ENCODE measurements at regions of chr7 and their contacts with region 1.

Region 1: DNA sequence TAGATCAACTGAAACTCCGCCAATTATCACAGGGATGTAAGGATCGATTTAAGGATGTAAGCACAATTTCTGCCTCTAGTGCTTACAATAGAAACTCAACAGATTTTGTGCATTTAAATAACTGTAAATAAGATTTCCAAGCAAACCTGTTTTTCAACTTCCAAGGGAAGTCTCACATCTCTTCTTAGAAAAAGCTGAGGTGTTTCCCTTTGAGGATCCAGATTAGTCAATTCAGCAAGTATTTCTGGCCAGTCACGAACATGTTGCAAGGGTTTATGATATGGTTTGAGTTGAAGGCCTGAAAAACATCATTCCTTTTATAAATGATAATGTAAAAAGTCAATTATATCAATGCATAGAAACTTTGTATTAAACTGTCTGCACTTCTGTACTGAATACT is 24.0 kb downstream of the KRIT1 start:
- DNase-seq: no peak
- ATAC-seq: no peak
- H3K4me3 ChIP-seq: no peak overlapping the region
- H3K27ac ChIP-seq: no peak overlapping the region
- H3K4me1 ChIP-seq: no peaks in the 10 kb centered on the region
- H3K27me3 ChIP-seq: no peaks in the 10 kb centered on the region
- CTCF ChIP-seq: no peak

Region 2: GRCh38 chr7:92075434-92076158 is 146.2 kb before region 1 on chr7:
- intact Hi-C with region 1: loop called in 1 of 2 experiments (anchors 5 kb)
- DNase-seq: no peak
- ATAC-seq: no peak
- H3K4me3 ChIP-seq: no peak overlapping the region
- H3K27ac ChIP-seq: no peak overlapping the region
- H3K4me1 ChIP-seq: no peaks in the 10 kb centered on the region
- H3K27me3 ChIP-seq: no peaks in the 10 kb centered on the region
- CTCF ChIP-seq: no peak

Region 3: GRCh38 chr7:92095380-92095779 is 126.4 kb before region 1 on chr7:
- intact Hi-C with region 1: loop called (anchors 5 kb)
- DNase-seq: no peak
- ATAC-seq: no peak
- H3K4me3 ChIP-seq: no peak overlapping the region
- H3K27ac ChIP-seq: no peak overlapping the region
- H3K4me1 ChIP-seq: no peaks in the 10 kb centered on the region
- H3K27me3 ChIP-seq: no peaks in the 10 kb centered on the region
- CTCF ChIP-seq: no peak

Region 4: GRCh38 chr7:92192326-92192725 is 29.4 kb before region 1 on chr7:
- intact Hi-C with region 1: no loop called
- DNase-seq: no peak
- ATAC-seq: no peak
- H3K4me3 ChIP-seq: no peak overlapping the region
- H3K27ac ChIP-seq: no peak overlapping the region
- H3K4me1 ChIP-seq: no peaks in the 10 kb centered on the region
- H3K27me3 ChIP-seq: no peaks in the 10 kb centered on the region
- CTCF ChIP-seq: no peak

Region 5: DNA sequence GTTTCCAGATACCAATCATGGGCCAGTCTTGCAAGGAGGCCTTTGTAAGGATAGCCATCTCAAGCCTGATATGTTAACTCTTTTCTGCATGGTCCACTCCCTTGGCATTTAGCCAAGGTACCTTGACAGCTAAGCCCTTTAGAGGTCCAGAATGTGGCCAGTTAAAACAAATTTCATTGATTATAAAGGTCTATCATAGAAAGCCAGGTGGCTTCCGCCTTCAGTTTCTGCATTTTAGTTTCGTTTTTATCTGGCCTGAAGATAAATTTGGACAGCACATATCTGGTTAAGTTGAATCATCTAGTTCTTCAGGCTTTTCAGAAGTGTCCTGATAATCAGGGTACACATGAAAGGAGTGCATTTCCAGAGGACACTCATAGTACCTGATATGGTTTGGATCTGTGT is 54.7 kb after region 1 on chr7:
- intact Hi-C with region 1: no loop called
- DNase-seq: no peak
- ATAC-seq: no peak
- H3K4me3 ChIP-seq: no peak overlapping the region
- H3K27ac ChIP-seq: no peak overlapping the region
- H3K4me1 ChIP-seq: peaks cover 9% of the 10 kb centered on the region
- H3K27me3 ChIP-seq: no peaks in the 10 kb centered on the region
- CTCF ChIP-seq: no peak

Measured in psoas muscle (tissue), 8 donors.